ENCODE measurements at regions of chr18 and their contacts with region 1.

Region 1: DNA sequence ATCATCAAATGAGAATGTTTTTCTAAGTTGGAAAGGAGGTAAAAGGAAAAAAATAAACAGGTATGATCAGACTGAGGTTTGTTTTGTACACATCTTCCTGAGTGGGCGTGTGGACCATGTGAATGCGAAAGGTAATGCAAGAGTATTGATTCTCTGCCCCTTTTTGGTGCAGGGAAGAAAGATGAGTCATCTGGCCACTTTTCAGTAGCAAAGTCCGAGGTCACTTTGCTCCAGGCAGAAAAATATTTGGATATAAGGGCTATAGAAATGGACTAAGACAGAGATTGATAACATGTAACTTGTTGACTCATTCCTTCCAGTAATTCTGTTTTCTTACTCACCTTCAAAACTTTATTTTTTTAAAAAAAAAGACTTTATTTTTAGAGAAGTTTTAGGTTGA is 130.5 kb downstream of the DSEL start:
- DNase-seq: peak; percentile 48
- ATAC-seq: peak; percentile 14; the same call in 1 of the 2 replicates
- H3K4me3 ChIP-seq: no peak overlapping the region
- H3K27ac ChIP-seq: no peak overlapping the region
- H3K4me1 ChIP-seq: no peaks in the 10 kb centered on the region; the same call in 1 of the 2 replicates
- H3K27me3 ChIP-seq: no peaks in the 10 kb centered on the region
- CTCF ChIP-seq: no peak
- POLR2A ChIP-seq: no peak
- RAD21 ChIP-seq: no peak

Region 2: GRCh38 chr18:67367540-67367939 is 18.5 kb before region 1 on chr18:
- CTCF ChIA-PET with region 1: no interaction called
- POLR2A ChIA-PET with region 1: interaction called, 10 read pairs
- dilution Hi-C with region 1: no loop called
- in situ Hi-C with region 1: no loop called
- intact Hi-C with region 1: no loop called
- DNase-seq: peak; percentile 38
- ATAC-seq: no peak
- H3K4me3 ChIP-seq: no peak overlapping the region
- H3K27ac ChIP-seq: no peak overlapping the region
- H3K4me1 ChIP-seq: no peaks in the 10 kb centered on the region
- H3K27me3 ChIP-seq: no peaks in the 10 kb centered on the region
- CTCF ChIP-seq: no peak
- POLR2A ChIP-seq: no peak
- RAD21 ChIP-seq: no peak

Region 3: GRCh38 chr18:67500522-67501205 is 114.6 kb after region 1 on chr18:
- CTCF ChIA-PET with region 1: no interaction called
- POLR2A ChIA-PET with region 1: no interaction called
- dilution Hi-C with region 1: no loop called
- in situ Hi-C with region 1: no loop called
- intact Hi-C with region 1: no loop called
- DNase-seq: peak; percentile 28
- ATAC-seq: peak; percentile 12; the same call in 1 of the 2 replicates
- H3K4me3 ChIP-seq: no peak overlapping the region
- H3K27ac ChIP-seq: no peak overlapping the region
- H3K4me1 ChIP-seq: peaks cover 6% of the 10 kb centered on the region
- H3K27me3 ChIP-seq: no peaks in the 10 kb centered on the region
- CTCF ChIP-seq: no peak
- POLR2A ChIP-seq: no peak
- RAD21 ChIP-seq: no peak

Region 4: GRCh38 chr18:67766930-67767329 is 380.9 kb after region 1 on chr18:
- CTCF ChIA-PET with region 1: no interaction called
- POLR2A ChIA-PET with region 1: no interaction called
- dilution Hi-C with region 1: no loop called
- in situ Hi-C with region 1: no loop called
- intact Hi-C with region 1: no loop called
- DNase-seq: peak; percentile 99
- ATAC-seq: peak; percentile 88
- H3K4me3 ChIP-seq: no peak overlapping the region
- H3K27ac ChIP-seq: no peak overlapping the region
- H3K4me1 ChIP-seq: peaks cover 7% of the 10 kb centered on the region
- H3K27me3 ChIP-seq: no peaks in the 10 kb centered on the region
- CTCF ChIP-seq: no peak
- POLR2A ChIP-seq: no peak
- RAD21 ChIP-seq: no peak